ENCODE measurements at regions of chr1 and their contacts with region 1.

Region 1: GRCh38 chr1:25247024-25247828 is at the start of gene RSRP1:
- DNase-seq: peak; percentile 95
- H3K4me3 ChIP-seq: peak within 1 kb of the TSS; percentile 99
- H3K27ac ChIP-seq: peak within 1 kb of the TSS; percentile 99
- H3K27me3 ChIP-seq: no peaks in the 10 kb centered on the region
- CTCF ChIP-seq: no peak
- polyA plus RNA-seq, gene RSRP1: 49.7 and 65.7 TPM in 2 replicates

Region 2: DNA sequence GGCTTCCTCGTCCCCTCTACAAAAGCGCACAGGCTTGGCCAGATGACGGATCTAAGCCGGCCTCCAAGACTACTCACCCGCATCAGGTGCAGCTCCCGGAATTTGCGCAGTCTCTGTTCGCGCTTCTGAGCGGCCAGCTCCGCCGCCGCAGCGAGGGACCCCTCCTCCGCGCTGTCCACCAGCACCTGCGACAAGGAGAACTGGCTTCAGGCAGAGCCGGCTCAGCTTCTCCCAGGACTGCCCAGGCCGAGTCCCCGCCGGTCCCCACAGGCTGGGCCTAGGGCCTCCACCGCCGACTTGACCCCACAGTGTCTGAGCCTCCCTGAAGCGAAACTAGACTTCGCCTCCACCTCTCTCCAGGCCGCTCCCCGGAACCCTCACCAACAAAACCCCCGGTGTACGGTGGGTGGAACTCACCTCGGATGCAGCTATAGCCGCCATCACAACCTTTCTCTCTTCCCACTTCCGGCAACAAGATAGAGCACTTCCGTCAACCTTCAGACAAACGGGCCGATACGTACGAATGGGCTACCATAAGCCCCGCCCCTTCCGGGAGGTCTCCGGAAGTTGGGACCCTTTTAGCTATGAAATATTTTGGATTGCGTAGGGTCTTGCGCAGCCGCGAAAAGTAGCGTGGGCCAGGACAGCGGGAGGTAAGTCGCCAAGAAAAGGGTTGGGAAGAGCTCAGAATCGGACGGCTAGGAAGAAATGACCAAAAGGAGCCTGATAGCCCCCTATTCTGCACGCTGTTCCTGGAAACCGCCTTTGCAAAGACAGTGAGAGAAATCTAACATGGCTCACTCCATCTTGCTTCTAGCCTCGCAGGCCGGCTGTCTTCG is 15.0 kb before region 1 on chr1 and contains the start of gene SYF2:
- CTCF ChIA-PET with region 1: no interaction called
- POLR2A ChIA-PET with region 1: interaction called, 36 read pairs
- DNase-seq: peak; percentile 83
- H3K4me3 ChIP-seq: peak within 1 kb of the TSS; percentile 95
- H3K27ac ChIP-seq: peak within 1 kb of the TSS; percentile 89
- H3K27me3 ChIP-seq: no peaks in the 10 kb centered on the region
- CTCF ChIP-seq: no peak
- polyA plus RNA-seq, gene SYF2: 33.7 and 48.3 TPM in 2 replicates

Region 3: GRCh38 chr1:25431506-25431881 is 184.3 kb after region 1 on chr1:
- CTCF ChIA-PET with region 1: no interaction called
- POLR2A ChIA-PET with region 1: interaction called, 11 read pairs
- DNase-seq: no peak
- H3K4me3 ChIP-seq: peak overlapping the region; percentile 80
- H3K27ac ChIP-seq: no peak overlapping the region
- H3K27me3 ChIP-seq: no peaks in the 10 kb centered on the region
- CTCF ChIP-seq: no peak

Measured in AG04450 (cell line).